Activated CD8-positive, alpha-beta T cell treated with anti-CD3 and anti-CD28 coated beads for 36 hours (primary cell): ENCODE measurements at regions of chr1 and their contacts with region 1.

Region 1: DNA sequence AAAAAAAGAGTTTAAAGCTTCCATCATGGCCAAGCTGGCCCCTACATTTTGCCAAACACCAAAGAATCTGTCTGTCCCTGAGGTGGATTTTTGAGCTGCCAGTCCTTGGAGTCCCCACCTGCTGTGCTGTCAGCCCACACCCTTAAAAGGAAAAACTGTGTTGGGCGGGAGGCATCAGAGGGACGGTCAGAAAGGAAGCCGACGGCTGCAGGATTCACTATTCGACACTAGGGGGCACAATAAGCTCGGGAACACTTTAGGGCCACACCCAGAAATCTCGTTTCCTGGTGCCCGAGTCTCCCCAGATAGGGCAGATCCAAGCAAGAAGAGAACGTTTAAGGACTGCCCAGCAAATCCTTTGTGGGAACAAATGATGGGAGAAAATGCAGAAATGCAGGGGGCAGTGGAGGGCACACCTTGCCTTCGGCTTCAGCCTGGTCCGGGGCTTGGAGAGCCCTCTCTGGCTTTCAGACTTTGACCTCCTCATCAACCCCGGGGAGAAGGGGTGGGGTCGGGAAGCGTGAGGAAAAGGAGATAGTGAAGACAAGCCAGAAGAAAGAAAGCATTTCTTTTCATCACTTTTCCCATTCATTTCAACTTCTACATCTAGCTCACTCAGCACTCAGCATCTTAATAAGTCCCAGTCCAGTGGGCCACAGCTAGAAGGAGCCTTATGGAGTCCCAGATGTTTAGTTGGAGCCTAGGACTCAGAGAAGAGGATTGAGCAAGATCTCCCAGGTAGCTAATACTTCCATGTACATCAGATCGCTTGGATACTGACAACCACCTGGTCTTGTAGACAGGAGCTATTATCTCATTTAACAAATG is 5.0 kb upstream of the CTTNBP2NL start:
- DNase-seq: peak; percentile 88
- ATAC-seq: peak; percentile 91
- H3K4me3 Mint-ChIP-seq: peak overlapping the region; percentile 48
- H3K27ac Mint-ChIP-seq: no peak overlapping the region
- H3K4me1 Mint-ChIP-seq: peaks cover 18% of the 10 kb centered on the region
- H3K27me3 Mint-ChIP-seq: peaks cover 32% of the 10 kb centered on the region
- CTCF ChIP-seq: peak; percentile 86

Region 2: GRCh38 chr1:112445596-112445995 is 54.6 kb after region 1 on chr1:
- CTCF ChIA-PET with region 1: interaction called, 10 read pairs
- POLR2A ChIA-PET with region 1: no interaction called
- intact Hi-C with region 1: no loop called
- DNase-seq: no peak
- ATAC-seq: no peak
- H3K4me3 Mint-ChIP-seq: no peak overlapping the region
- H3K27ac Mint-ChIP-seq: no peak overlapping the region
- H3K4me1 Mint-ChIP-seq: no peaks in the 10 kb centered on the region
- H3K27me3 Mint-ChIP-seq: no peaks in the 10 kb centered on the region
- CTCF ChIP-seq: no peak

Region 3: DNA sequence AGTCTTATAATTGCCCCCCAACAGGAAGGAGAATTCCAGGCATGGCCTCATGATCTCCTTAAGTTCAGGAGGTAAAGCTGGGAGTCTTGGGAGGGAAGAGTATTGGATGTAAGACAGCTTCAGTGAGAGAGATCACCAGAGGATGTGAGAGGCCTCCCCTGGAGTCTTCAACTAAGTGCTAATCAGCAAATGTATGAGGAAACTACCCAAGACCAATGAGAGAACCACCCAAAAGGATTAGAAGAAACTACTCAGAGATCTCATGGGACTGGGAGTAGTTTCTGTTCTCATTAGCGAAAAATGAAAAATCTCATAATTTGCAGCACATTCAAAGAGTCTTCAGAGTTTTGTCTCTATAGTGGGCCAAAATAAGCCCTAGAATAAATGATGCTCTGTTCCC is 81.2 kb after region 1 on chr1:
- CTCF ChIA-PET with region 1: interaction called, 122 read pairs
- POLR2A ChIA-PET with region 1: no interaction called
- intact Hi-C with region 1: loop called (anchors 2 kb)
- DNase-seq: no peak
- ATAC-seq: no peak
- H3K4me3 Mint-ChIP-seq: no peak overlapping the region
- H3K27ac Mint-ChIP-seq: no peak overlapping the region
- H3K4me1 Mint-ChIP-seq: no peaks in the 10 kb centered on the region
- H3K27me3 Mint-ChIP-seq: peaks cover 37% of the 10 kb centered on the region
- CTCF ChIP-seq: no peak

Region 4: DNA sequence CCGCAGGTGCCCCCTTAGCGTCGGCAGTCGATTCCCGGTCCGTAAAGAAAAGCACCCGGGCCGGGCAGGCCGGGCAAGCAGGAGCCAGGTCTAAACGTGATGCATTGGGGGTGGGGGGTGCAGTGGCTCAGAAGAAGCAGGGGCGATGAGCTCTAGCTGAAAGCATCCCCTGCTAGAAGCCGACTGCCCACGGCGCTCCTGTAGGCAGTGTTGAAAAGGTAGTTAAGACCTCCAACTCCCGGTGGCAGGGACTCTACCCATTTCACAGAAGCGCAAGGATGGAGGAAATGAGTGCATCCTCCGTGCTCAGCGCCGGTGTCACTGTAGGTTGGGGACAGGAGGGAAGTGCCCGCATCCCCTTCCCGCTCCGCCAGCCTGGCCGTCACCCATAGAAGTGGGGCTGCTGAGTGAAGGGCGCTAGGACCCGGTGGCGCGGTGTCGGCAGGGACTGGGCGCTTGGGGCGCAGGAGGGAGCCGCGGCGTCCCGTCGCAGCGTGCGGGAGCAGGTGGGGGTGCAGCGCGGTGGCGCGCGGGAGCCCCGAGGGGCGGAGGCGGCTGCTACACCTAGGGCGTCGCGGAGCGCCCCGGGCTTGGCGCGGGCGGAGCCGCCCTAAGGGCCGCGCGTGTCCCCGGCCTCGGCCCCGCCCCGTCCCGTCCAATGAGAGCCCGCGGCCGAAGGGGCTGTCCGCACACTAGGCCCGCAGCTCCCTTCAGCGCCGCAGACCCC is 117.5 kb after region 1 on chr1 and contains the start of gene WNT2B:
- CTCF ChIA-PET with region 1: interaction called, 14 read pairs
- POLR2A ChIA-PET with region 1: no interaction called
- intact Hi-C with region 1: no loop called
- DNase-seq: peak; percentile 64
- ATAC-seq: peak; percentile 82
- H3K4me3 Mint-ChIP-seq: peak within 1 kb of the TSS; percentile 67
- H3K27ac Mint-ChIP-seq: no peak within 1 kb of the TSS
- H3K4me1 Mint-ChIP-seq: peaks cover 2% of the 10 kb centered on the region
- H3K27me3 Mint-ChIP-seq: peaks cover 32% of the 10 kb centered on the region
- CTCF ChIP-seq: no peak
- total RNA-seq, gene WNT2B: not detected

Region 5: DNA sequence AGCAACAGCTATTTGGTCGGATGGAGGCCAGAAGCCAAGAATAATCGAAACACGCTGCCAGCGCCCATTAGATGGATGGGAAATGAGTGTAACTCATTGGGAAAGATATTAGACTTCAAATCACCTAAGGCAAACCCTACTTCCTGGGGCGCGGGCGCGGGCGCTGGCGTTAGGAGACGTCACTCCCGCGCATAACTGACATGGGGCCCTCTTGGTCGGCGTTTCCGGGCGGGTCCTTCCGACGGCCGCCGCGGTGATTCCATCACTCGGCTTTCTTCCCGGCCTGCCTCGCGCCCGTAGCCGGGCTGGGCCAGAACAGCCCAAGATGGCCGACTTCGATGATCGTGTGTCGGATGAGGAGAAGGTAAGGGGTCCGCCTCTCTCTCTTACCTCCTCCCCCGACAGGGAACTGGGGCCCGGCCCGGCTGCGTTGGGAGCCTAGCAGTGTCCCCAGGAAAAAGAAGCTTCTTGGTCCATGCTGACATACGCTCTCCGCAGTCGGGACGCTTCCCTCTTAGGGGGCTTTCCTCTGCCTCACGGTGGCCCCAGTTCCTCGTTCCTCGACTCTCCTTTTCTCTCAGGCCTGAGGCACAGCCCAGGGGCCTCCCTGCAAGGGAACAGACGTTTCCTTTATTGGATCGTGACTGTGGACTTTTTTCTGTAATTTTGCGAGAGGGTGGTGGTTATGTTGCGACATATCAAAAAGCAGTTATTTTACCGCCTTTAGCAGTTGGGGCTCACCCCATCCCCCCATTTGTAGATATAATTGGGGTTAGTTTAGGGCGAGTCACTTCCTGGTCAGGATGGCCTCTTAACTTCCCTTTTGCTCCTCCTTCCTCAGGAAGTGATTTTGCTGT is 228.8 kb after region 1 on chr1 and contains the start of gene CAPZA1:
- CTCF ChIA-PET with region 1: interaction called, 16 read pairs
- POLR2A ChIA-PET with region 1: no interaction called
- intact Hi-C with region 1: no loop called
- DNase-seq: peak; percentile 95
- ATAC-seq: peak; percentile 85
- H3K4me3 Mint-ChIP-seq: peak within 1 kb of the TSS; percentile 99
- H3K27ac Mint-ChIP-seq: peak within 1 kb of the TSS; percentile 100
- H3K4me1 Mint-ChIP-seq: peaks cover 29% of the 10 kb centered on the region
- H3K27me3 Mint-ChIP-seq: no peaks in the 10 kb centered on the region
- CTCF ChIP-seq: no peak
- total RNA-seq, gene CAPZA1: 220 to 230 TPM

Region 6: DNA sequence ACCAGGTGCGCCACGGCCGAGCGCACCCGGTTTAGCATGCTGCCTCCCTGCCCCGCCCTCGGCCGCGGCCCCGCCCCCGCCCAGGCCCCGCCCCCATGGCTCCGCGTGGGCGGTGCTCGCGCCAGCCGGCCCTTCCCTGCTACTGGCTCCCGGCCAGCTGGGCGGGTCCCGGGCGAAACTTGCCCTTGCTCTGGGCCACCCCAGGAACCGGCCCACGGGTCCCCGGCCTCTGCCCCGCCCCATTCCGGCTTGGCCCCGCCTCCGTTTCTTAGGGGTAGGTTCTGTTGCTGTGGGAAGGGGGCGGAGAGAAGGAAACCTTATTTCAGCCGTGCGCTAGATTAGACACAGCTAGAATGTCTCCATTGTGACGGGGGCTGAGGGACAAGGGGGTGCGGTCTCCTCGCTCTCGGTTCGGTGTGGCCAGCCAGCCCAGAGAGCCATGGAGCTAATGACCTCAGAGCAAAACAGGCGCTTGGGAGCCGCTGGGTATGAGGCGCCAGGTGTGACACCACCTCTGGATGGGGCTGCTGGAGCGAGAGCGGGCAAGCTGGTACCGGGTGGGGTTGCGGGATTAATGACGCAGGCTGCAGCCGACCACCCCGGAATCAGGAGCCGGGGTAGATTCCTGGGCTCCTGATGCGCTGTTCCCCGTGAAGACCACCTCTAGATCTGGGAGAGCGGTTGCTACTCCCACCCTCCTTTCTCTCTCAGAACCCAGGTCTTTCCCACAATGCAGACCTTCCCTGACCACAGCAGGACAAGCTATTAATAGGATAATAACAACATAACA is 324.5 kb after region 1 on chr1 and contains the start of gene PPM1J:
- CTCF ChIA-PET with region 1: interaction called, 21 read pairs
- POLR2A ChIA-PET with region 1: no interaction called
- intact Hi-C with region 1: no loop called
- DNase-seq: peak; percentile 98
- ATAC-seq: peak; percentile 90
- H3K4me3 Mint-ChIP-seq: peak within 1 kb of the TSS; percentile 76
- H3K27ac Mint-ChIP-seq: no peak within 1 kb of the TSS
- H3K4me1 Mint-ChIP-seq: peaks cover 19% of the 10 kb centered on the region
- H3K27me3 Mint-ChIP-seq: peaks cover 30% of the 10 kb centered on the region
- CTCF ChIP-seq: no peak
- total RNA-seq, gene PPM1J: 1.7 to 2.8 TPM